ENCODE measurements at regions of chr2 and their contacts with region 1.

Region 1: GRCh38 chr2:113826346-113827285 is 63.3 kb upstream of the ACTR3 start:
- DNase-seq: no peak
- H3K4me3 Mint-ChIP-seq: no peak overlapping the region
- H3K27ac Mint-ChIP-seq: no peak overlapping the region
- H3K4me1 Mint-ChIP-seq: no peaks in the 10 kb centered on the region
- H3K27me3 Mint-ChIP-seq: no peaks in the 10 kb centered on the region
- CTCF ChIP-seq: no peak

Region 2: GRCh38 chr2:113734185-113734584 is 92.4 kb before region 1 on chr2:
- CTCF ChIA-PET with region 1: no interaction called
- intact Hi-C with region 1: no loop called
- DNase-seq: no peak
- H3K4me3 Mint-ChIP-seq: no peak overlapping the region
- H3K27ac Mint-ChIP-seq: no peak overlapping the region
- H3K4me1 Mint-ChIP-seq: no peaks in the 10 kb centered on the region
- H3K27me3 Mint-ChIP-seq: no peaks in the 10 kb centered on the region
- CTCF ChIP-seq: no peak

Region 3: GRCh38 chr2:114579542-114579941 is 752.9 kb after region 1 on chr2:
- CTCF ChIA-PET with region 1: interaction called, 11 read pairs
- intact Hi-C with region 1: no loop called
- DNase-seq: no peak
- H3K4me3 Mint-ChIP-seq: no peak overlapping the region
- H3K27ac Mint-ChIP-seq: no peak overlapping the region
- H3K4me1 Mint-ChIP-seq: no peaks in the 10 kb centered on the region
- H3K27me3 Mint-ChIP-seq: peaks cover 29% of the 10 kb centered on the region
- CTCF ChIP-seq: no peak

Measured in Calu3 (cell line).